Activated CD4-positive, alpha-beta T cell treated with anti-CD3 and anti-CD28 coated beads for 36 hours (primary cell): ENCODE measurements at regions of chr11 and their contacts with region 1.

Region 1: DNA sequence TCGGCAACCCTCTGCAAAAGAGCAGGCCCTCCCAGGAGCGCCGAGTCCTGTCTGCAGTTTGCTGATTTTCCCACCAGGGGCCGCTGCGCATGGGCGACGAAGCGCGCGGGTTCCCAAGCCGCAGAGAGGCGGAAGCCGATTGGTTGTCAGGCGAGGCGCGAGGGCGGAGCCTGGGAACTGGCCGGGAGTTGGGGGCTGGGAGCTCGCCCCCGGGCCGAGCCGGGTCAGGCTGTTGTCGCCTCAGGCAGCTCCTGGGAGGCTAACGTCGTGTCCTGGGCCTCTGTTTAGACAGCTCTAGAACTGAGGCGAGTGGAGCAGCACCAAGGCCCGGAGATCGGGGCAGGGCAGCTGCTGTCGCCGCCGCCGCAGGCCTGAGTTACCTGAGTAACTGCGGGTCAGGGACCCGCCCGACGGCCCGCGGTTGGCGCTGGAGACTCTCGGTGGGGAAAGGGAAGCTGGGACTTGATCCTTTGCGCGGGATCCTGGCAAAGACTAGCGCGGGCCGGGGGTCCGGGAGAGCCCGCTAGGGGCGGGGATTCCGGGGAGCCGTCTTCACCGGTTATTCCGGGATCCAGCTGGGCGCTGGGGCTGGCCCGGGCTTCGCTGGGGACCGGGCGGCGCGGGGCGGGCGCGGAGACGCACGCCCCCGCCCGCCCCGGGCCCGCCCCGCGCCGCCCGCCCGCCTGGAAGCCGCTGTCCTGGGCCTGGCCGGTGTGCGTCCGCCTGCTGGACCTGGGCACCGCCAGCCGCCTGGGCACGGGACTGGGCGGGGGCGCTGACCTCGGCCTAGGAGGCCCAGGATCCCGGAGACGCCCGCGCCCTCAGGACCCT is at the start of gene STIM1:
- DNase-seq: peak; percentile 99
- ATAC-seq: peak; percentile 76
- H3K4me3 Mint-ChIP-seq: peak within 1 kb of the TSS; percentile 88
- H3K27ac Mint-ChIP-seq: peak within 1 kb of the TSS; percentile 99
- H3K4me1 Mint-ChIP-seq: peaks cover 56% of the 10 kb centered on the region
- H3K27me3 Mint-ChIP-seq: no peaks in the 10 kb centered on the region
- total RNA-seq, gene STIM1: 60.0 to 62.6 TPM

Region 2: GRCh38 chr11:3764266-3764665 is 90.9 kb before region 1 on chr11:
- CTCF ChIA-PET with region 1: no interaction called
- POLR2A ChIA-PET with region 1: no interaction called
- intact Hi-C with region 1: no loop called
- DNase-seq: no peak
- ATAC-seq: no peak
- H3K4me3 Mint-ChIP-seq: no peak overlapping the region
- H3K27ac Mint-ChIP-seq: no peak overlapping the region
- H3K4me1 Mint-ChIP-seq: no peaks in the 10 kb centered on the region
- H3K27me3 Mint-ChIP-seq: no peaks in the 10 kb centered on the region

Region 3: DNA sequence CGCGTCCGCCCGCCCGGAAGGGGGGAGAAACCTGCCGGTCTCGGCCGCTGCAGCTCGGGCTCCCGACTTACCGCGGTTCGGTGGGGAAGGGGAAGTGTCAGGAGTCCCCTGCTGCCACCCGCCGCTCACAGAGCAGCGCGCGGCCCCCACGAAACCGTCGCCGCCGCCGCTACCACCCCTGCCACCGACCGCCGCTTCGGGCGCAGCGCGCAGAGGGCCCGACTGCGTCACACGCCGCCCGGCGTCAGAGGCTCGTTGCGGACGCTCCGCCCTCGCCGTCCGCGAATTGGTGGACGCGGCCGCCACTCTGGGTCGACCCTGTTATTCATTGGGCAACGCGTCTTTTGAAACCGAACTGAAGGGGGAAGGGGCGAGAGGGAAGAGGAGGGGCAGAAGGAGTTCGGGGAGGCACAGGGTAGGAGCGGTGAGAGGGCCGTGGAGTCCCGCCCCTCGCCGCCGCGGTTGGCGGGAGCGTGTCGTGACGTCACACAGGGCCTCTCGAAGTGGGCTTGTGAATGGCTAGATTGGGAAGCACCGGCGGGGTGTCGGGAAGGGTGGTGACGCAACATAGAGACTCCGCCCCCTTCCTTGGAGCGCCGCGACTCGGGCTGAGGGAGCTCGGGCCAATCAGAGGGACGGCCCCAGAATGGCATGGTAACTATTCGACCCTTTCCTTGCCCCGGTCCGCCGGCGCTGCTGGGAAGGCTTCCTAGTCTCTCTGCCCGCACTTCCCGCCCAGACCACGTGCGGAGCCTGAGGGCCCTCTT is 57.7 kb before region 1 on chr11 and contains the start of gene NUP98:
- CTCF ChIA-PET with region 1: interaction called, 3 read pairs
- POLR2A ChIA-PET with region 1: interaction called, 8 read pairs
- intact Hi-C with region 1: loop called in 1 of 2 experiments (anchors 1 kb)
- DNase-seq: peak; percentile 100
- ATAC-seq: peak; percentile 98
- H3K4me3 Mint-ChIP-seq: peak within 1 kb of the TSS; percentile 99
- H3K27ac Mint-ChIP-seq: peak within 1 kb of the TSS; percentile 100
- H3K4me1 Mint-ChIP-seq: peaks cover 39% of the 10 kb centered on the region
- H3K27me3 Mint-ChIP-seq: no peaks in the 10 kb centered on the region
- total RNA-seq, gene NUP98: 96.0 to 134 TPM

Region 4: DNA sequence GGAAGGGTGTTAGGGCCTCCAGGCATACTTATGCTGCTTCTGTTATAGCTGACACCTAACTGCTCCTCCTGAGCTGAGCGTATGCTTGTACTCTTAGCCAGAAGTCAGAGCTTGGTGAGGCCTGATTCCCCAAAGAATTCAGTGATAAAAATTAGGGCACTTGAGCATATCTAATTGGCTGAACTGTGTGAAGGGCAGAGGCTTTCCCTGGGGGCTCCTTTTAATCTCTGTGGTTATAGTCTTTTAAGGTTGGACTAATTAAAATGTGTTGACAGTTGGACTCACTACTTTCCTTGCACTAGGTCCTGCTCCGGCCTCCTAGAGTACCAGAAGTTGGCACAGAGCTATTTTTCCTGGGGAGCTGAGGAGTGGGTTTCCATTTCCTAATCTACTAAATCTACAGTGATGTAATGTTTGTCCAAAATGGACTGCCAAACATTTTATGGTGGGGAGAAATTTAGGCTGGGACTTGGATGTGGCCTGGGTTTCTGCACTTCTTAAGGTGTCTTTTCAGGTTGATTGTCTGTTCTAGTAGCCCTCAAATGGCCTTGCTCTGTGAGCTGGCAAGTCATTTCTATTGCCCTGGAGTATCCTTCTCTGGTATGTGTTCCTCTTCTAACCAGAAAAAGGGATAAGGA is 18.6 kb after region 1 on chr11:
- CTCF ChIA-PET with region 1: interaction called, 18 read pairs
- POLR2A ChIA-PET with region 1: interaction called, 8 read pairs
- intact Hi-C with region 1: loop called in 1 of 2 experiments (anchors 2 kb)
- DNase-seq: no peak
- ATAC-seq: no peak
- H3K4me3 Mint-ChIP-seq: no peak overlapping the region
- H3K27ac Mint-ChIP-seq: no peak overlapping the region
- H3K4me1 Mint-ChIP-seq: peaks cover 86% of the 10 kb centered on the region
- H3K27me3 Mint-ChIP-seq: no peaks in the 10 kb centered on the region

Region 5: GRCh38 chr11:3905080-3905953 is 50.1 kb after region 1 on chr11:
- CTCF ChIA-PET with region 1: interaction called, 34 read pairs
- POLR2A ChIA-PET with region 1: interaction called, 7 read pairs
- intact Hi-C with region 1: loop called (anchors 1 to 2 kb)
- DNase-seq: peak; percentile 83
- ATAC-seq: peak; percentile 98
- H3K4me3 Mint-ChIP-seq: peak overlapping the region; percentile 5
- H3K27ac Mint-ChIP-seq: peak overlapping the region; percentile 55
- H3K4me1 Mint-ChIP-seq: peaks cover 77% of the 10 kb centered on the region
- H3K27me3 Mint-ChIP-seq: no peaks in the 10 kb centered on the region

Region 6: GRCh38 chr11:3947061-3947460 is 91.9 kb after region 1 on chr11:
- CTCF ChIA-PET with region 1: interaction called, 15 read pairs
- POLR2A ChIA-PET with region 1: interaction called, 4 read pairs
- intact Hi-C with region 1: loop called in 1 of 2 experiments (anchors 2 kb)
- DNase-seq: peak; percentile 60
- ATAC-seq: peak; percentile 85
- H3K4me3 Mint-ChIP-seq: peak overlapping the region; percentile 34
- H3K27ac Mint-ChIP-seq: peak overlapping the region; percentile 88
- H3K4me1 Mint-ChIP-seq: peaks cover 94% of the 10 kb centered on the region
- H3K27me3 Mint-ChIP-seq: no peaks in the 10 kb centered on the region

Region 7: DNA sequence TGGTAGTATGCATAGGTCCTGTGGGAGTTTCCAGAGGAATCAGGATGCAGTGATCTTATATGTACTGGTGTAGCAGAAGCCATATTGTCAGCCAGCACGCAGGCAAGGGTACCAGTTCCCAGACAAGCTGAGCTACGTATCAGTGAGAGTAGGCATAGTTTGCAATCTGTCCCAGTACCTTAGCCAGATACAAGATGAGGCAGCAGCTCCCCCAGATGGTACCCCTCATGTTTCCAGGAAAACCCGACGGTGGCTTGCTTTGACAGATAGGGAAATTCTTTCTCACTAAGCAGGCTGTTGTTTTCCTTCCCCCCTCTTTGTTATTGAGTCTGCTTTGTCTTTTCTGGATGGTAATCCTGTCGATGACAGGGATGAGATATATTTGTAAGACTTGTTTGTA is 129.7 kb after region 1 on chr11:
- CTCF ChIA-PET with region 1: interaction called, 18 read pairs
- POLR2A ChIA-PET with region 1: interaction called, 3 read pairs
- intact Hi-C with region 1: loop called (anchors 2 to 10 kb)
- DNase-seq: peak; percentile 76
- ATAC-seq: peak; percentile 85
- H3K4me3 Mint-ChIP-seq: no peak overlapping the region
- H3K27ac Mint-ChIP-seq: peak overlapping the region; percentile 49
- H3K4me1 Mint-ChIP-seq: peaks cover 75% of the 10 kb centered on the region
- H3K27me3 Mint-ChIP-seq: no peaks in the 10 kb centered on the region

Region 8: DNA sequence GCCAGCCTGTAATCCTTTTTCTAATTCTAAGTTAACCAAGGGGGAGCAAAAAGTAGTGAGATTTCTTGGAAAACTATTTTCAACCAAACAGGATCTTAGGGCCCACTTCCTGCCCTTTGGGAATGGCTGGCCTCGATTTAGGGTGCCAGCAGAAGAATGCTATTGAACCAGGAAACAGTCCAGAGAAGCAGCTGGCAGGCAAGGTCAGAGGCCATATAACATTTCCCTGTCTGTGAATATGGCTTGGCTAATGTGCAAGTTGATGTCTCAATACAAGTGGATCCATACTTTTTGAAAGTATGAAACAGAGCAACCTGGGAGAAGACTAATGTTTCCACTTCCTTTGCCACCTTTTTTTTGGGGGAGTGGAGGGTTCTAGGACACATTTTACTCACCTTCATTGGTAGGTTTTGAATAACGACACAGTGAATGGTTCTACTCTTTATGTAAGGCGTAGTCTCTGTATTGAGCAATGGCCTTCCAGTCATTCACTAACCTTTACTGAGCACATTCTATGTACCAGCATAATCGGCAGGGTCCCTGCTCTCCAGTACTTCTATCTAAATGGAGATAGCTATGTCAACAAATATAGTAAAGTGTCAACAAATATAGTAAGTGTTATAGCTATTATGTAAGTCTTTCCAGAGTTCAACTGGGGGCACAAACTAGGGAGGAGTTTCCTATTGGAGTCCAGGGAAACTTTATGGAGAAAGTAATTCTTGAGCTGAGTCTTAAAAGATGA is 205.2 kb after region 1 on chr11:
- CTCF ChIA-PET with region 1: interaction called, 19 read pairs
- POLR2A ChIA-PET with region 1: interaction called, 22 read pairs
- intact Hi-C with region 1: loop called in 1 of 2 experiments (anchors 1 kb)
- DNase-seq: no peak
- ATAC-seq: no peak
- H3K4me3 Mint-ChIP-seq: no peak overlapping the region
- H3K27ac Mint-ChIP-seq: no peak overlapping the region
- H3K4me1 Mint-ChIP-seq: peaks cover 37% of the 10 kb centered on the region
- H3K27me3 Mint-ChIP-seq: no peaks in the 10 kb centered on the region